Dorsolateral prefrontal cortex (tissue), 120 donors: ENCODE measurements at regions of chr12 and their contacts with region 1.

Region 1: GRCh38 chr12:93397412-93397811 is 19.7 kb downstream of the NUDT4 start:
- DNase-seq: no peak
- H3K4me3 ChIP-seq: no peak overlapping the region
- H3K27ac ChIP-seq: peak overlapping the region in 4 of 59 donors; percentile 10 to 60 (median 45)
- H3K27me3 ChIP-seq: no peaks in the 10 kb centered on the region
- CTCF ChIP-seq: no peak

Region 2: GRCh38 chr12:92987362-92987761 is 410.1 kb before region 1 on chr12:
- intact Hi-C with region 1: loop called (anchors 2 to 5 kb)
- DNase-seq: peak in 1 of 10 donors; percentile 23
- H3K4me3 ChIP-seq: peak overlapping the region in 1 of 59 donors; percentile 2
- H3K27ac ChIP-seq: peak overlapping the region in 3 of 59 donors; percentile 4 to 31 (median 11)
- H3K27me3 ChIP-seq: no peaks in the 10 kb centered on the region
- CTCF ChIP-seq: peak; percentile 63 to 94 (median 79)